Activated CD8-positive, alpha-beta T cell treated with anti-CD3 and anti-CD28 coated beads, Interleukin-2, amount 10 ng/mL, durations not matched to agents 7 days and 5 days (primary cell): ENCODE measurements at regions of chr1 and their contacts with region 1.

Region 1: GRCh38 chr1:234309598-234310459 is 63.4 kb upstream of the COA6 start:
- DNase-seq: peak; percentile 81
- ATAC-seq: peak; percentile 84
- H3K4me3 Mint-ChIP-seq: no peak overlapping the region
- H3K27ac Mint-ChIP-seq: no peak overlapping the region
- H3K4me1 Mint-ChIP-seq: peaks cover 13% of the 10 kb centered on the region
- H3K27me3 Mint-ChIP-seq: no peaks in the 10 kb centered on the region

Region 2: DNA sequence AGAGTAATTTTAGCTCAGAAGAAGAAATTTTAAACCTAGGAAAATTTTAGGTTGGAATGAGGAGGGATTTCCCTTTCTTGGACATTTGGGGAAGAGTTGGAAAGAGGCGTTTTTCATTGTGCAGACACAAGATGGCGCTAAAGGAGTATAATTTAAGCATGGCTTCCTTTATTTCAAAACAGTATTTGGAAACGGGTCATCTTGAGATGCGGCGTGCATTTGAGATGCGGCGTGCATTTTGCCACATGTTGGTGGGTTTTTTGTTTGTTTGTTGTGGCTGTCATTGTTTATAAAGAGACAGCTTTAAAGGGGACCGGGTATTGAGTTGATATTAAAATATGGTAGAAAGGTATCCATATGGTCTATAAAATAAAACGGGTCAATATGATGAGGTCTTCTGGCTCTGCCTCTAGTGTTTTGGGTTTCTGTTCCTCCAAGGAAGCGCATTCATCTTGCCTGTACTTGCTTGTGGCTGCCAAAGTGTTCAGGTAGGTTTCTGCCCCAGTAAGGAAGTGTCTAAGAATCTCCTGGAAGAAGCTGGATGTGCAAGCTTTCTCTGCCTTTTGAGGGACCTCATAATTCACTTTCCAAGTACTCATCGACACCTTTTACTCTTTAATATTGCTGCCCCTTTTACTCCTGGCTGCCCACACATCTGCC is 195.1 kb before region 1 on chr1:
- CTCF ChIA-PET with region 1: interaction called, 75 read pairs
- POLR2A ChIA-PET with region 1: no interaction called
- DNase-seq: peak; percentile 54
- ATAC-seq: peak; percentile 71
- H3K4me3 Mint-ChIP-seq: peak overlapping the region; percentile 49
- H3K27ac Mint-ChIP-seq: no peak overlapping the region
- H3K4me1 Mint-ChIP-seq: peaks cover 6% of the 10 kb centered on the region
- H3K27me3 Mint-ChIP-seq: peaks cover 31% of the 10 kb centered on the region

Region 3: DNA sequence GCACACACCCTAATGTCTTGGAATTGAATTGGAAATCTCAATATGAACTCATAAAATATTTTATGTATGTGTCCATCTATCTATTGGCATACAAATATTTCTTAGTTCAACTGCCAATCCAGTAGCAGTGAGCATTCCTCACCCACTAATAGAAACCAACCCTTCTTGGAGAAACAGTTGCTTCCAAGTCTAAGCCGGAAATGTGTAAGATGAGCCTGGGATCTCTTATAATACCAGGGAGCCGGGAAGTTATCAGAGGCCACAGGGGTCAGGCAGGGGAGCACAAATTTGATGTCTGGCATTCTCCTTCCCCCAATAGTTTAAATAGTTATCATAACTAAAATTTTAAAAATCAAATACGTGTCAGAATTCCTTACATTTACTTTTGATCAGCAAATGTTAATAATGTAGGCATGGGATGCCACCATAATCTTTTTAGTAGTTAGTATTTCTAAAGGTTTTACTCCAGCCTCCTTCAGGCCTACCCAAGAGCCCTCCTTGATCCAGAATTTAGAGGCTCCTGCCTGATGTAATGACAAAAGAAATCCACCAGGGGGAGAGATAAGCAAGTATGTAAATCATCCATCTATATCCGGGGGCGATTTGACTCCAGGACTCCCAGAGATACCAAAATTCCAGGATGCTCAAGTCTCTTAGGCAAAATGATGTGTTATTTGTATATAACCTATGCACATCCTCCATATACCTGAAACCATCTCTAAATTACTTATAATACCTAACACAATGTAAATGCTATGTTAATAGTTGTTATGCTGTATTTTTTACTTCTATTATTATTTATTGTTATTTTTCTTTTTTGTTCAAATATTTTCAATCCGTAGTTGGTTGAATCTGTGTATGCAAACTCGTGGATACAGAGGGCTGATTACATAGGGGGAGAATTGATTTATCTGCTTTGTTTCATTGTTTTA is 155.2 kb before region 1 on chr1:
- CTCF ChIA-PET with region 1: interaction called, 24 read pairs
- POLR2A ChIA-PET with region 1: interaction called, 3 read pairs
- DNase-seq: peak; percentile 61
- ATAC-seq: peak; percentile 70
- H3K4me3 Mint-ChIP-seq: no peak overlapping the region
- H3K27ac Mint-ChIP-seq: no peak overlapping the region
- H3K4me1 Mint-ChIP-seq: peaks cover 2% of the 10 kb centered on the region
- H3K27me3 Mint-ChIP-seq: peaks cover 22% of the 10 kb centered on the region

Region 4: DNA sequence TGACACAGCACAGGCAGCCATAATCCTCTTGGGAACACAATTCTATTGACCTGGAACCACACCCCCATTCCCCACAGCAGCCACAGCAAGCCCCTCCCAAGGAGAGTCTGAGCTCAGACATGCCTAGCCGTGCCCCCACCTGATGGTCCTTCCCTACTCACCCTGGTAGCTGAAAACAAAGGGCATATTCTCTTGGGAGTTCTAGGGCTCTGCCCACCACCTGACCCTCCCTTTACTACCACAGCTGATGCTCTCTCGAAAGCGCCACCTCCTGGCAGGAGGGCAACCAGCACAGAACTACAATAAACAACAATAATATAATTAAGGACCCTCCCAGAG is 121.4 kb before region 1 on chr1:
- CTCF ChIA-PET with region 1: interaction called, 11 read pairs
- POLR2A ChIA-PET with region 1: no interaction called
- DNase-seq: peak; percentile 41
- ATAC-seq: no peak
- H3K4me3 Mint-ChIP-seq: no peak overlapping the region
- H3K27ac Mint-ChIP-seq: no peak overlapping the region
- H3K4me1 Mint-ChIP-seq: peaks cover 5% of the 10 kb centered on the region
- H3K27me3 Mint-ChIP-seq: peaks cover 54% of the 10 kb centered on the region

Region 5: DNA sequence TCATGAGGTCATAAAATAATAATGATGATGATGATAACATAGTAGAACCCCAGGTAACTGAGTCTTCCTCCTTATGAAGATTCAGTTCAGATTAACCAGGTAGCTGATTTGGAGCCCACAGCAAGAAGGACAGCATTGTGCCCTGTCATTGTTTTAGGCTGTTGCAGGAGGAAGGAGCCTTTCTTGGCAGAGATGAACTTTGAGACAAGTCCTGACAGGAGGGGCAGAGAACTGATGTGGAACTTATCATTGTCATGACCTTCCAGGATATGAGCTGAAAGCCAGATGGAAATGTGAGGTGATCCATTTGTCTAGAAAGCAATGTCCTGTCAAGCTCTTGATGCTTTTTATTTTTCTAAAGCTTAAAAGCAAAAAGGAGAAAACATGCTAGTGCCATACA is 69.1 kb before region 1 on chr1:
- CTCF ChIA-PET with region 1: interaction called, 13 read pairs
- POLR2A ChIA-PET with region 1: no interaction called
- DNase-seq: no peak
- ATAC-seq: no peak
- H3K4me3 Mint-ChIP-seq: no peak overlapping the region
- H3K27ac Mint-ChIP-seq: no peak overlapping the region
- H3K4me1 Mint-ChIP-seq: peaks cover 28% of the 10 kb centered on the region
- H3K27me3 Mint-ChIP-seq: no peaks in the 10 kb centered on the region

Region 6: DNA sequence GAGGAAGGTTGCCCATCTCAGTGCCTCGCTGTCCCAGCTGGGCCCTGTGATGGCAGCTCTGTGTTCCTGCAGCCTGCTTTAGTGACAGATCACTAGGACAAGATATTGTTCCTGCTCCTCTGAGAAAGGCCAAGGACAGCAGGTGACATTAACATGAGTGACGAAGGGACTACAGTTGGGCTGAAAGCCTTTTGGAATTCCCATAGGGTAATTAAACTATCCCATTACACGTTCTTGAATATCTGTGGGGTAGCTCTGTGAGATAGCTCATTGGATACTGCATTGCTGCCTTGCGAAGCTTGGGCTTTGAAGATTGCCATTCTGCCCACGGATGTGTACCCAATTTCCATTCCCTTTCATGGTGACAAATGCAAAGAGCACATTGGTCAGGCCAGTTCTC is 14.8 kb before region 1 on chr1:
- CTCF ChIA-PET with region 1: interaction called, 17 read pairs
- POLR2A ChIA-PET with region 1: no interaction called
- DNase-seq: no peak
- ATAC-seq: no peak
- H3K4me3 Mint-ChIP-seq: no peak overlapping the region
- H3K27ac Mint-ChIP-seq: no peak overlapping the region
- H3K4me1 Mint-ChIP-seq: no peaks in the 10 kb centered on the region
- H3K27me3 Mint-ChIP-seq: peaks cover 2% of the 10 kb centered on the region